ENCODE measurements at regions of chr19 and their contacts with region 1.

Region 1: GRCh38 chr19:12666265-12667048 is at the starts of genes MAN2B1 and WDR83:
- DNase-seq: peak; percentile 56 to 86 (median 72)
- ATAC-seq: peak; percentile 82
- H3K4me3 ChIP-seq: peak within 1 kb of the TSS; percentile 92
- H3K4me3 Mint-ChIP-seq: peak within 1 kb of the TSS; percentile 90 to 100 (median 98)
- H3K27ac ChIP-seq: peak within 1 kb of the TSS; percentile 99
- H3K27ac Mint-ChIP-seq: peak within 1 kb of the TSS; percentile 77 to 100 (median 91)
- H3K4me1 ChIP-seq: peaks cover 38% of the 10 kb centered on the region in 2 donors
- H3K4me1 Mint-ChIP-seq: peaks cover 22 to 69% (median 45%) of the 10 kb centered on the region in 7 donors
- H3K27me3 ChIP-seq: no peaks in the 10 kb centered on the region
- H3K27me3 Mint-ChIP-seq: no peaks in the 10 kb centered on the region
- total RNA-seq, gene MAN2B1: 105 to 215 (median 138) TPM
- total RNA-seq, gene WDR83: 7.8 to 18.6 (median 14.7) TPM

Region 2: GRCh38 chr19:11924886-11925650 is 741.4 kb before region 1 on chr19 and contains the start of gene ZNF700:
- CTCF ChIA-PET with region 1: no interaction called
- POLR2A ChIA-PET with region 1: no interaction called
- intact Hi-C with region 1: no loop called
- DNase-seq: peak; percentile 67 to 93 (median 90)
- ATAC-seq: peak; percentile 94
- H3K4me3 ChIP-seq: peak within 1 kb of the TSS; percentile 98
- H3K4me3 Mint-ChIP-seq: peak within 1 kb of the TSS; percentile 91 to 99 (median 98)
- H3K27ac ChIP-seq: peak within 1 kb of the TSS; percentile 75
- H3K27ac Mint-ChIP-seq: peak within 1 kb of the TSS; percentile 93 to 99 (median 98)
- H3K4me1 ChIP-seq: peaks cover 6 to 10% of the 10 kb centered on the region in 2 donors
- H3K4me1 Mint-ChIP-seq: peaks cover 26 to 56% (median 39%) of the 10 kb centered on the region in 7 donors
- H3K27me3 ChIP-seq: no peaks in the 10 kb centered on the region
- H3K27me3 Mint-ChIP-seq: no peaks in the 10 kb centered on the region
- total RNA-seq, gene ZNF700: 18.0 to 26.4 (median 22.8) TPM

Region 3: GRCh38 chr19:11942008-11942842 is 724.2 kb before region 1 on chr19:
- CTCF ChIA-PET with region 1: no interaction called
- POLR2A ChIA-PET with region 1: no interaction called
- intact Hi-C with region 1: no loop called
- DNase-seq: no peak
- ATAC-seq: no peak
- H3K4me3 ChIP-seq: no peak overlapping the region
- H3K4me3 Mint-ChIP-seq: no peak overlapping the region
- H3K27ac ChIP-seq: no peak overlapping the region
- H3K27ac Mint-ChIP-seq: no peak overlapping the region
- H3K4me1 ChIP-seq: no peaks in the 10 kb centered on the region
- H3K4me1 Mint-ChIP-seq: peaks cover 0 to 5% (median 0%) of the 10 kb centered on the region in 7 donors
- H3K27me3 ChIP-seq: no peaks in the 10 kb centered on the region
- H3K27me3 Mint-ChIP-seq: no peaks in the 10 kb centered on the region

Region 4: GRCh38 chr19:12564016-12564664 is 102.3 kb before region 1 on chr19:
- CTCF ChIA-PET with region 1: interaction called, 32 read pairs
- POLR2A ChIA-PET with region 1: interaction called, 5 read pairs
- intact Hi-C with region 1: loop called in 1 of 2 experiments (anchors 1 kb)
- DNase-seq: peak; percentile 79 to 96 (median 88)
- ATAC-seq: peak; percentile 100
- H3K4me3 ChIP-seq: no peak overlapping the region
- H3K4me3 Mint-ChIP-seq: peak overlapping the region in 1 of 10 donors; percentile 33
- H3K27ac ChIP-seq: no peak overlapping the region
- H3K27ac Mint-ChIP-seq: peak overlapping the region in 2 of 9 donors; percentile 3 to 51
- H3K4me1 ChIP-seq: no peaks in the 10 kb centered on the region
- H3K4me1 Mint-ChIP-seq: peaks cover 0 to 6% (median 5%) of the 10 kb centered on the region in 7 donors
- H3K27me3 ChIP-seq: no peaks in the 10 kb centered on the region
- H3K27me3 Mint-ChIP-seq: no peaks in the 10 kb centered on the region

Region 5: GRCh38 chr19:12603714-12604113 is 62.7 kb before region 1 on chr19:
- CTCF ChIA-PET with region 1: no interaction called
- POLR2A ChIA-PET with region 1: no interaction called
- intact Hi-C with region 1: no loop called
- DNase-seq: peak in 8 of 9 donors; percentile 45 to 68 (median 61)
- ATAC-seq: peak; percentile 88
- H3K4me3 ChIP-seq: no peak overlapping the region
- H3K4me3 Mint-ChIP-seq: peak overlapping the region in 7 of 10 donors; percentile 5 to 60 (median 32)
- H3K27ac ChIP-seq: no peak overlapping the region
- H3K27ac Mint-ChIP-seq: peak overlapping the region in 7 of 9 donors; percentile 14 to 82 (median 68)
- H3K4me1 ChIP-seq: peaks cover 4 to 15% of the 10 kb centered on the region in 2 donors
- H3K4me1 Mint-ChIP-seq: peaks cover 0 to 17% (median 11%) of the 10 kb centered on the region in 7 donors
- H3K27me3 ChIP-seq: no peaks in the 10 kb centered on the region
- H3K27me3 Mint-ChIP-seq: no peaks in the 10 kb centered on the region